ENCODE measurements at regions of chr1 and their contacts with region 1.

Region 1: DNA sequence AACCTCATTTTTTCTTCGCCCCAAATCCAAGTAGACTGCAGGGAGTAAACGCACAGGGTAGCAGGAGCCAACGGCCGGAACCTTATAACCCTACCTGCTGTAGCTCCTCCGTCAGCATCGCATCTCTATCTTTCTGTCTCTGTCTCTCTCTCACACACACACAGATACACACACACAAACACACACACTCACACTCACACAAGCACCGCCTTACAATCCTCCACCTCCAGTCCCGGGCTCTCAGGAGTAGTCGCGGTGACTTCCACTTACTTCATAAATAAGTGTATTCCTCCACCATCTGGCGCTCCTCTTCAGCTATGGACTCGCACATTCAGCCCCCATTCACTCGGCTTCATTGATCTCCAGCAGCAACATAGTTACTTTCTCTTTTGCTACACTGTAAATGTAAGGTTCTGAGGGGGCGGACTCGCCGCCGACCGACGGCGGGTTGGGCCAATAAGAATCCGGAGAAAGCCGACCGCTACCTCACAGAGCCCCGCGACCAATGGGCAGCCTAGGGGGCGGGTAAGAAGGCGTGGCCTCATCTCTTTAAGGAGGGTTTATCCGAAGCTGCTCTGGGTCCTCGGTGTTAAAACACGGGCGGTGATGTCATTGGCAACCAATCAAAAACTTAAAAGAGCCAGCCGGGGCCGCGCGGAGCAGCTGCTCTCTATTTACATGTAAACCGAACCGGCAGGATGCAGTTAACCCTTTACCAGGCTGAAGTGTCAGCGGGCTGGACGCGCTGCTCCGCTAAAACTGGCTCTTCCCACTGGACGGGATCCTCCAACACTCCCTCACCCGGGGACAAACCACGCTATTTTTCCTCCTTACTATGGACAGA is at the start of gene DUSP10:
- DNase-seq: peak; percentile 100
- ATAC-seq: peak; percentile 82
- H3K4me3 ChIP-seq: peak within 1 kb of the TSS; percentile 89
- H3K27ac ChIP-seq: peak within 1 kb of the TSS; percentile 85
- H3K4me1 ChIP-seq: peaks cover 15% of the 10 kb centered on the region
- H3K27me3 ChIP-seq: no peaks in the 10 kb centered on the region
- CTCF ChIP-seq: no peak
- total RNA-seq, gene DUSP10: 5.1 and 6.2 TPM in 2 replicates

Region 2: GRCh38 chr1:221478050-221478949 is 263.6 kb before region 1 on chr1:
- CTCF ChIA-PET with region 1: interaction called, 6 read pairs
- POLR2A ChIA-PET with region 1: no interaction called
- intact Hi-C with region 1: loop called (anchors 1 kb)
- DNase-seq: peak; percentile 94
- ATAC-seq: peak; percentile 100
- H3K4me3 ChIP-seq: no peak overlapping the region
- H3K27ac ChIP-seq: peak overlapping the region; percentile 53
- H3K4me1 ChIP-seq: peaks cover 20% of the 10 kb centered on the region
- H3K27me3 ChIP-seq: no peaks in the 10 kb centered on the region
- CTCF ChIP-seq: peak; percentile 98

Region 3: GRCh38 chr1:221612264-221612777 is 129.6 kb before region 1 on chr1:
- CTCF ChIA-PET with region 1: no interaction called
- POLR2A ChIA-PET with region 1: interaction called, 6 read pairs
- intact Hi-C with region 1: loop called (anchors 1 kb)
- DNase-seq: peak; percentile 99
- ATAC-seq: peak; percentile 89
- H3K4me3 ChIP-seq: no peak overlapping the region
- H3K27ac ChIP-seq: peak overlapping the region; percentile 73
- H3K4me1 ChIP-seq: peaks cover 45% of the 10 kb centered on the region
- H3K27me3 ChIP-seq: no peaks in the 10 kb centered on the region
- CTCF ChIP-seq: no peak

Region 4: GRCh38 chr1:221824025-221824424 is 82.1 kb after region 1 on chr1:
- CTCF ChIA-PET with region 1: no interaction called
- POLR2A ChIA-PET with region 1: no interaction called
- intact Hi-C with region 1: loop called (anchors 5 kb)
- DNase-seq: peak; percentile 87
- ATAC-seq: peak; percentile 96
- H3K4me3 ChIP-seq: no peak overlapping the region
- H3K27ac ChIP-seq: peak overlapping the region; percentile 74
- H3K4me1 ChIP-seq: peaks cover 31% of the 10 kb centered on the region
- H3K27me3 ChIP-seq: no peaks in the 10 kb centered on the region
- CTCF ChIP-seq: no peak

Region 5: DNA sequence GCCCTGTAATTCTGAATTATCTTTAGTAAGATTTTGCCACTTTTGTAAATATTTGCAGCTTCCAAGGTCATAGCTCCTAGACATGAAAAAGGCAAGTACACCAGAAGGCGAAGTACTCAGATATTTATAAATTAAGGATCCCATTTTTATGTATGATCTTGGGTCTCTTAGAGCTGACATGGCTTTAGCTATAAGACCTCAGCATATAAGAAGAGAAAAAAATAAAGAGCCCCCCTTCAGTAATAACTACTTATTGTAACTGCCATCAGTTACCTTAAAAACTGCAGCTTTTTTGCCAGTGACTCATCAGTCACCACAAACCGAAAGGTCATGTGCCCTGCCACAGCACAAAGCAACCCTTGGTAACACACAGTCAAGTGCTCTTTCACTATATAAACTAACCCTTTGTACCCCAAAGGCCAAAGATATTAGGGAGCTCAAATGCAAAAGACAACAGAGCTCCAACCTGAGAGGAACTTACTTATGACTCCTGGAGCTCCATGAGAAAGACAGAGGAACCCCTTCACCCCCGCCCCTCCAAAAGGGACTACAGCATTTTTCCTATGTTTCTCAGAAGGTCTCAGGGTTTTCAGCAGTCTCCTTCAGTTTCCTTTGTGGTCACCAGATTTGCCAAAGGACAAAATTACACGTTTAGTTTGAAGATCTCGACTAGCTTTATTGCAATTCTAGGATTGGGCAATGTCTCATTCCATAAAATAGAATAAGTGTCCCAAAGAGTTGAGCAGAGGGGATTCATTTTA is 219.8 kb after region 1 on chr1:
- CTCF ChIA-PET with region 1: interaction called, 4 read pairs
- POLR2A ChIA-PET with region 1: no interaction called
- intact Hi-C with region 1: loop called (anchors 2 kb)
- DNase-seq: peak; percentile 93
- ATAC-seq: peak; percentile 50
- H3K4me3 ChIP-seq: peak overlapping the region; percentile 27; the same call in 1 of the 2 replicates
- H3K27ac ChIP-seq: peak overlapping the region; percentile 74
- H3K4me1 ChIP-seq: peaks cover 65% of the 10 kb centered on the region
- H3K27me3 ChIP-seq: no peaks in the 10 kb centered on the region
- CTCF ChIP-seq: no peak

Region 6: DNA sequence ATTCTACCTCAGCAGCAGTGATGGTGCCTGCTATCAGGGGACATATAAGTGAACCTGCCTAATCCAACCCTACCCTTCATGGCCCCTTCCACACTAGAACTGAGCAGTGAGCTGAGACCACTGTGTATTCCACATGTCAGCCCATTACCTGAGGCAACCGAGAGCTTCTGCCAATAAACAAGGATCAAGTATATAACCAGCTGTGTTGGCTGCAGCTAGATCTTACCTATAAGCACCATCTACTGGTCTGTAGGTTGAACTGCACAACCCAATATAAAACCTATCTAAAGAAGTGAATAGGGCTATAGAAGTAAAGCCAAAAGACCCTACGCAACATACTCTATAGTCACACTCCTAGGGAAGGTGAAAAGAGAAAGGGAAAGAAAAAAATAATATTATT is 429.1 kb after region 1 on chr1:
- CTCF ChIA-PET with region 1: interaction called, 4 read pairs
- POLR2A ChIA-PET with region 1: interaction called, 3 read pairs
- intact Hi-C with region 1: loop called (anchors 1 kb)
- DNase-seq: peak; percentile 77
- ATAC-seq: peak; percentile 71
- H3K4me3 ChIP-seq: no peak overlapping the region
- H3K27ac ChIP-seq: no peak overlapping the region
- H3K4me1 ChIP-seq: no peaks in the 10 kb centered on the region
- H3K27me3 ChIP-seq: no peaks in the 10 kb centered on the region
- CTCF ChIP-seq: peak; percentile 90

Measured in PC-3 (cell line).